HCT116 (cell line): ENCODE measurements at regions of chr7 and their contacts with region 1.

Region 1: DNA sequence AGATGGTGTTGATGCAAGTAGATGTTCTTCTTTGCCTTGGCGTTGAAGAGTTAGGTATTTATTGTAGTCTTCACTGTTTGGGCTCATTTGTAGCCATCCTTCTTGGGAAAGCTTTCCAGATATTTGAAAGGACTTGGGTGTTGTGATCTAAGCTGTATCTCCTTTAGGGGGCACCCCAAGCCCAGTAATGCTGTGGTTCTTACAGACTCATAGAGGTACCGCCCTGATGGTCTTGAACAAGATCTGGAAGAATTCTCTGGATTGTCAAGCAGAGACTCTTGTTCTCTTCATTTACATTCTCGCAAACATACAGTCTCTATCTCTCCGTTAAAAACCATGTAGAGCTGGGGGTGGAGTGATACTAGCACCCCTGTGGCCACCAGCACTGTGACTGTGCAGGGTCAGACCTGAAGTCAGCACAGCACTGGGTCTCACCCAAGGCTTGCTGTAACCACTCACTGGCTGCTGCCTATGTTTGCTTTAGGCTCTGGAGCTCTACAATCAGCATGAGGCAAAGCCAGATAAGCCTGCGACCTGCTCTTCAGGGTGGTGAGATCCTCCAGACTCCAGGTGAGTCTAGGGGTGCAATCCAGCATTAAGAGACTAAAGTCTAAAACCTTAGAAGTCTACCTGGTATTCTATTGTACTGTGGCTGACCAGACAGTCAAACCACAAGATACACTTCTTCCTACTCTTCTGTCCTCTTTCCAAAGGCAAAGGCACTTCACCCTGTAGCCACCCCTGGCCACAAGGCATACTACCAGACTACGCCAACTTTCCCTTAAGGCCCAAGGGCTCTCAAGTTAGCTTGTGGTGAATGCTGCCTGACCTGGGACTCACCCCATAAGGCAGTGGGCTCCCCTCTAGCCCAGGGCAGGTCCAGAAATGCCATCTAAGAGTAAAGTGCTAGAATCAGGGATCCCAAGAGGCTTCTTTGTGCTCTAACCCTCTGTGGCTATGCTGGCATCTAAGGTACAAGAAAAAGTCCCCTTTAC is 209.7 kb upstream of the TMEM196 start:
- DNase-seq: peak; percentile 35
- ATAC-seq: peak; percentile 71
- H3K4me3 ChIP-seq: no peak overlapping the region
- H3K27ac ChIP-seq: no peak overlapping the region
- H3K4me1 ChIP-seq: peaks cover 0 to 7% of the 10 kb centered on the region in 2 experiments; a peak in 1 of 4 replicates
- H3K27me3 ChIP-seq: no peaks in the 10 kb centered on the region
- CTCF ChIP-seq: peak; percentile 35 to 45 (median 41); a peak in 3 of 6 replicates
- POLR2A ChIP-seq: no peak
- RAD21 ChIP-seq: peak; percentile 75

Region 2: DNA sequence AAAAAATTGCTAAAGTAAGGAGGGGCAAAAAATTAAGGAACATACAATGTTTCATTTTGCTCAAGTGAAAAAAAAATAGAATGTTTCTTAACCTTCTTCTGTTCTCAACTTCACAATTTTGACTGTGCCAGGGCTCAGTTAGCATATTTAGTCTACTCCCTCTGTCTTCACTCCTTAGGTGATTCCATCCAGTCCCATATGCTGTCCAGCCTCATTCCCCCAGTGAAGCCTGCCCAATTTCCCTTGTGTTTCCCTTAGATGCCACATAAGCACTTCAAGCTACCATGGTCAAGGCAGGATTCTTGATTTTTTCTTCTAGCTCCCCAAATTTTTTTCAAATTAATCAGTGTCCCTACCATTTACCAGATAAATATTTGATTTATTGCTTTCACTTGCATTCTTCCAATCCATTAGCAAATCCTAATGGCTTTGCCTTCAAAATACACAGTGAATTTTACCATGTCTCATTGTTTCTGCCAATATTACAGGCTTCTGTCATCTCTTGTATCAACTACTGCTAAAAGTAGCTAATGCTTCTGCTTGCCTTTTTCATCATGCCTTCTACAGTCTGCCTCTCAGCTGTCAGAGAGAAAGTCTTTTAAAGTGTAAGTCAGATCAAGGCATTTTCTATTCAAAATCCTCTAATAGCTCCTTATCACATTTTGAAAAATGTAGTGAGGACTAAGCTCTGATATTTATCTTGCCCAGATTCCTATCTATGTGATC is 67.3 kb after region 1 on chr7:
- CTCF ChIA-PET with region 1: no interaction called
- POLR2A ChIA-PET with region 1: no interaction called
- RAD21 ChIA-PET with region 1: no interaction called
- intact Hi-C with region 1: no loop called
- DNase-seq: no peak
- ATAC-seq: no peak
- H3K4me3 ChIP-seq: no peak overlapping the region
- H3K27ac ChIP-seq: no peak overlapping the region
- H3K4me1 ChIP-seq: no peaks in the 10 kb centered on the region
- H3K27me3 ChIP-seq: no peaks in the 10 kb centered on the region
- CTCF ChIP-seq: no peak
- POLR2A ChIP-seq: no peak
- RAD21 ChIP-seq: no peak

Region 3: GRCh38 chr7:20172736-20173334 is 189.7 kb after region 1 on chr7:
- CTCF ChIA-PET with region 1: interaction called, 21 read pairs
- POLR2A ChIA-PET with region 1: no interaction called
- RAD21 ChIA-PET with region 1: interaction called in 1 of 2 experiments, 7 read pairs
- intact Hi-C with region 1: loop called (anchors 2 kb)
- DNase-seq: peak; percentile 52
- ATAC-seq: peak; percentile 98
- H3K4me3 ChIP-seq: no peak overlapping the region
- H3K27ac ChIP-seq: no peak overlapping the region
- H3K4me1 ChIP-seq: no peaks in the 10 kb centered on the region
- H3K27me3 ChIP-seq: no peaks in the 10 kb centered on the region
- CTCF ChIP-seq: peak; percentile 61 to 80 (median 78); a peak in 5 of 6 replicates
- POLR2A ChIP-seq: no peak
- RAD21 ChIP-seq: peak; percentile 77

Region 4: GRCh38 chr7:20310963-20311742 is 328.0 kb after region 1 on chr7:
- CTCF ChIA-PET with region 1: interaction called, 4 read pairs
- POLR2A ChIA-PET with region 1: no interaction called
- RAD21 ChIA-PET with region 1: no interaction called
- intact Hi-C with region 1: loop called (anchors 1 kb)
- DNase-seq: peak; percentile 38
- ATAC-seq: no peak
- H3K4me3 ChIP-seq: no peak overlapping the region
- H3K27ac ChIP-seq: no peak overlapping the region
- H3K4me1 ChIP-seq: no peaks in the 10 kb centered on the region
- H3K27me3 ChIP-seq: no peaks in the 10 kb centered on the region
- CTCF ChIP-seq: peak; percentile 22 to 60 (median 59); a peak in 3 of 6 replicates
- POLR2A ChIP-seq: no peak
- RAD21 ChIP-seq: peak; percentile 75